GM13976 (cell line): ENCODE measurements at regions of chr6 and their contacts with region 1.

Region 1: GRCh38 chr6:37005061-37005810 is at the start of gene FGD2:
- DNase-seq: peak; percentile 92
- CTCF ChIP-seq: no peak

Region 2: GRCh38 chr6:36720251-36721141 is 284.7 kb before region 1 on chr6:
- in situ Hi-C with region 1: no loop called
- DNase-seq: no peak
- CTCF ChIP-seq: no peak

Region 3: DNA sequence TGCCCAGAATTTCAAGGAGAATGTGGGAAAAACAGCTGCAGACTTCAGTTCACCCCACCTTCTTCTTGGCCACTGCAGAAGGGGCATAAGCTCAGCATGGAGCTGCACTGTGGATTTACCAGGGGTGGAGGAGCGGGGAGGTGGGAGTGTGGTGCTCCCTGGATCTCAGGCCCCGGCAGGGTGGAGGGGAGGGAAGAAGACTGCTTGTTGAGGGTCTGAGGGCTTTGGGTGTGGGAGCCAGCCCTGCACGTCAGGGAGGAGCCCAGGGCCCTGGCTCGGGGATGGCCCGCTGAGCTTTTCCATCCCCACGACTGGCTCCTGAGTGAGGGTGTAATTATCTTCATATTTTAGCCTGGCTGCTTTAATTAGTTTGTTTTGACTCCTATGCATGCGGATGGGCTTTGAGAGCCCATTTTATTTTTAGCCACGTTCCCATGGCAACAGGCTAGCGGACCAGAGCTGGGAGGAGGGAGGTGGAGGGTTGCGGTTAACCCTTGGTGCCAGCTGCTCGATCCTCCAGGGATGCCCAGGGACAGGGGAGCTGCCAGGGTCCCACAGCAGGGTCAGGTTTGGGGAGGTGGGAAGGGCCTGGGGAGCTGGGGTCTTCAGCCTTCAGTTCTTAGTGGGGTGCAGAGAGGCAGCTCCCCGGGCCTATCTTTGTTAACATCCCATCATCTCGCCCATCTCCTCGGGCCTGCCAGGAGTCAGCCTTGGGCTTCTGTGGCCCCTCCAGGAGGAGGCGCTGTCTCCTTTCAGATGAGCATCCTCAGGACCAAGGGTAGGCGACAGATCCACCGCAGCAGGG is 239.4 kb before region 1 on chr6:
- in situ Hi-C with region 1: loop called (anchors 10 kb)
- DNase-seq: peak; percentile 91
- CTCF ChIP-seq: peak; percentile 92

Region 4: DNA sequence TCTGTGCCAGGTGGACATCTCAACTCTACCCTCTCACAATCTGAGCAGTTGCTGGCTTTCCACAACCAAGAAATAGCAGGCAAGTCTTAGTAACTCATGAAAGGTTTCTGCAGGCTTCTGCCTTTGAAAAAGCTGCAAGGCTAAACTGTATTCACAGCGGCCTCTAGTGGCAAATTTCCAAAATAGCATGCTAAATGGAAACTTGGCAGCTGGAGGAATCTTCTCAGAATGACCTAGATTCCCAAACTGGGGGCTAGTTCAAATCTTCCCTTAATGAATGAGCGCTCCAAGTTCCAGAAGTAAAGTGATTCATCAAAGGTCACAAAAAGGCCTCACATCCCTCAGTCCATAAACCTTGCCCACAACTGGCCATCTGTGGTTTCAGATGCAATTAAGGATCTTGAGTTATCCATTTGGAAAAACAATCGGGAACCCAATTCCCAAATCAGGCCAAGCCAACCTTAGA is 154.1 kb before region 1 on chr6:
- in situ Hi-C with region 1: no loop called
- DNase-seq: peak; percentile 64
- CTCF ChIP-seq: peak; percentile 60

Region 5: GRCh38 chr6:36885461-36886401 is 119.5 kb before region 1 on chr6 and contains the start of gene C6orf89:
- in situ Hi-C with region 1: loop called (anchors 10 kb)
- DNase-seq: peak; percentile 94
- CTCF ChIP-seq: peak; percentile 75